Breast epithelium (tissue), 4 donors: ENCODE measurements at regions of chr17 and their contacts with region 1.

Region 1: DNA sequence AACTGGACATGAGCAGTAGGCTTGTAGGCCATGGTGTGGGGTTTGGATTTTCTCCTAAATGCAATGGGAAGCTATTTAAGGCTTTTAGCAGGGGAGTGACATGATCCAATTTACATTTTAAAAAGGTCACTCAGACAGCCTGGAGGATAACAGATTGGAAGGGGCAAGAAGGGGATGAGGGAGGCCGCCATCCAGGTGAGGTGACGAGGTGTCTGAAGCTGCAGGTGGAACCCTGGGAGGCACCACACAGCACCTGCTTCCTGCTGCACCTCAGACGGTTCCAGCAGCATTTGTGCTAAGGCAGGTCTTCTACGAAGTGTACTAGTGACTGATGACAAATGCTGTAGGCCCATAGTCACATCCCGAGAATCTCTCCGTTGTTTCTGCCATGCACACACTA is 65.3 kb upstream of the TANC2 start:
- DNase-seq: no peak
- H3K4me3 ChIP-seq: no peak overlapping the region
- H3K27ac ChIP-seq: no peak overlapping the region
- H3K4me1 ChIP-seq: peaks cover 0 to 4% of the 10 kb centered on the region in 2 donors
- H3K27me3 ChIP-seq: no peaks in the 10 kb centered on the region
- CTCF ChIP-seq: no peak
- POLR2A ChIP-seq: no peak

Region 2: GRCh38 chr17:62882878-62883277 is 17.9 kb before region 1 on chr17:
- intact Hi-C with region 1: no loop called
- DNase-seq: no peak
- H3K4me3 ChIP-seq: no peak overlapping the region
- H3K27ac ChIP-seq: no peak overlapping the region
- H3K4me1 ChIP-seq: no peaks in the 10 kb centered on the region
- H3K27me3 ChIP-seq: no peaks in the 10 kb centered on the region
- CTCF ChIP-seq: no peak
- POLR2A ChIP-seq: no peak

Region 3: GRCh38 chr17:62931101-62931500 is 30.3 kb after region 1 on chr17:
- intact Hi-C with region 1: loop called (anchors 1 kb)
- DNase-seq: no peak
- H3K4me3 ChIP-seq: no peak overlapping the region
- H3K27ac ChIP-seq: no peak overlapping the region
- H3K4me1 ChIP-seq: no peaks in the 10 kb centered on the region
- H3K27me3 ChIP-seq: no peaks in the 10 kb centered on the region
- CTCF ChIP-seq: no peak
- POLR2A ChIP-seq: no peak